GM10248 (cell line): ENCODE measurements at regions of chr19 and their contacts with region 1.

Region 1: GRCh38 chr19:48333467-48334384 is 8.4 kb downstream of the EMP3 start:
- DNase-seq: peak; percentile 94
- CTCF ChIP-seq: peak; percentile 96

Region 2: DNA sequence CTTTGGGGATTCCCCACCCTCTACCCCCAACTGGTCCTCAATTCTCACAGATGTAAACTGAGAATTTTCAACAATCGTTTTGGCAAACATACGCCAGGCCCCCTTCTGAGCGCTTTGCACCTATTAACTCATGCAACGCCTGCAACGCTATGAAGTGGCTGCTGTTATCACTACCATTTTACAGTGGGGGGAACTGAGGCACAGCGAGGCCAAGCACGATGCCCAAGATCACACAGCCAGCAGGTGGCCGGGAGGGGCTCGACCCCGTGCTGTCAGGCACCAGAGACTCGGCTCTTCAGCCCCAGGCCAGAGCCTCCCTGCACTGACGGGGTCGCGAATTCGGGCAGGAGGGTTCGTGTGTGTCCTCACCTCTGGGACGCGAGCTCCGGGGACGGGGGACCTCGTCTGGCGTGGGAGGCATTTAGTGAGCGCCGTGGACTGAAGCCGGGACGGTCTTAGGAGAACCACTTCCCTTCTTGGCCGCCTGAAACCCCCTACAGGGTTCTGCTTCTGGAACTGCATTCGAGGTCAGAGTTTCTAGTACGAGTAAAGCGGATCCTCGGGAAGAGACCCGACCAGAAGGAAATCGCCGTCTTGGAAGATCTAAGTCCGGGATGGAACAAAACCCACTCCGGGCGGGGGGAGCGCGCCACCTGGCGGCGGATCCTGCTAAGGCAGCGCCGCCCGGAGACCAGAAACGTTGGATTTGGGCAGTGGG is 42.8 kb before region 1 on chr19:
- CTCF ChIA-PET with region 1: no interaction called
- POLR2A ChIA-PET with region 1: no interaction called
- DNase-seq: peak; percentile 68
- CTCF ChIP-seq: peak; percentile 94

Region 3: GRCh38 chr19:48321622-48322591 is 11.8 kb before region 1 on chr19:
- CTCF ChIA-PET with region 1: interaction called, 248 read pairs
- POLR2A ChIA-PET with region 1: interaction called, 9 read pairs
- DNase-seq: peak; percentile 95
- CTCF ChIP-seq: no peak

Region 4: GRCh38 chr19:48363810-48364563 is 30.3 kb after region 1 on chr19 and contains the starts of genes SYNGR4 and TMEM143:
- CTCF ChIA-PET with region 1: interaction called, 43 read pairs
- POLR2A ChIA-PET with region 1: interaction called, 10 read pairs
- DNase-seq: peak; percentile 99
- CTCF ChIP-seq: no peak

Region 5: GRCh38 chr19:49387936-49388372 is 1054.2 kb after region 1 on chr19 and contains the start of gene KASH5:
- CTCF ChIA-PET with region 1: no interaction called
- POLR2A ChIA-PET with region 1: no interaction called
- DNase-seq: peak; percentile 81
- CTCF ChIP-seq: no peak